ENCODE measurements at regions of chr15 and their contacts with region 1.

Region 1: DNA sequence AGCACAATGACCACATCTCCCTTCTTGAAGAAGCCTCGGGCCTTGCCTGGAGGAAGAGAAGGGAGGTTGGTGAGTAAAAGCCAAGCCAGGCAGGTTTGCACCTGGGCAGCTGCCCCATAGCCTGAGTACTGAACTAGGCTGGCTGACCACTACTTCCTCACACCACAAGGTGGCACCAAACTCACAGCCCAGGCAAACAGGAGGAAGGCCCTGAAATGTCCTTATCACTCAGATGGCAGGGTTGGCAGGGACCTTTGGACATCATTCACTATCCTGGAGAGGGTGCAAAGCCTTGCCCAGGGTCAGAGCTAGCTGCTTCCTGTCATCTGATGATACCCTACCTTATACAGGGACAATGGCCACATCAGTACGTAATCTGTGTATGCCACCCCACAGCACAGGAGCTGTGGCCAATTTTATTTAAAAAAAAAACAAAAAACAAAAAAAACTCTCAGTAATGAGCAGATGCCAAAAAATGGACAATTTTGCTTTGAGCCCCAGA is 2.2 kb upstream of the GRAMD2A start:
- DNase-seq: peak; percentile 86
- H3K4me3 ChIP-seq: no peak overlapping the region
- H3K27ac ChIP-seq: no peak overlapping the region
- H3K4me1 ChIP-seq: peaks cover 37% of the 10 kb centered on the region
- H3K27me3 ChIP-seq: no peaks in the 10 kb centered on the region
- CTCF ChIP-seq: peak; percentile 76 to 88 (median 86)
- POLR2A ChIP-seq: no peak

Region 2: DNA sequence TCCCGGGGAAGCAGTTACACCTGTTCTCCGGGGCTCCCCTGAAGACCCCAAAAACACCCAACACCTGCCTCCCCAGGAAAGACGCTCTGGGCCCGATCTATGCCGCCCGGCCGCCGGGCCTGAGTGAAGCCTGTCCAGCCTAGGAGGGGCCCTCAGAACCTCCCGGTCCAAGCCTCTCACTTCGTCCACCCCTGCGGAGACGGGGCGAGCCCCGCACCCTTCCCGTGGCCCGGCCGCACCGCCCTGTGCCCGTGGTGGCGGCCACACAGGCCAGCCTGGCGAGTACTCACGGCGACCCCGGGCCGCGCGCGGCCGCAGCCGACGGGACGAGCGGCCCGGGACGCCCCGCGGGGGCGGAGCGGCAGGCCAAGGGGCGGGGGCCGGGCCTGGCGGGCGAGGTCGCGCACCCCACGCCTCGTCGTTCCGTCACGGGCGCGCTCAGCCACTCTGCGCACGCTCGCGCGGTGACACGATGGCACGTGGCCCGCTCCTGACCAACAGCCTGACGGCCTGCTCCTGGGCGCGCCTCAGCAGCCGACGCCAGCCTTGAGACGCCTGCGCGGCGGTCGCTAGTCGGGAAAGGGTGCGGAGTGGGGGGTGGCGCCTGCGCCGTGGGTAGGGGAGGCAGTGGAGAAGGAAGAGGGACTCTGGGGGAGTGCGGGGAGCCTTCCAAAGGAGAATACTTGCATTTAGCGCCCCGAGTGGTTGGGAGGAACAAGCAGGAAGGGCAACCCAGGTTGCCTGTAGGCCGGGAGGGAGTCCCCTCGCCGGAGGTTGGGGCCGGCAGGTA is 72.6 kb after region 1 on chr15 and contains the start of gene PARP6:
- intact Hi-C with region 1: loop called (anchors 10 kb)
- DNase-seq: peak; percentile 97
- H3K4me3 ChIP-seq: peak within 1 kb of the TSS; percentile 81 to 89
- H3K27ac ChIP-seq: peak within 1 kb of the TSS; percentile 90 to 92
- H3K4me1 ChIP-seq: peaks cover 19% of the 10 kb centered on the region
- H3K27me3 ChIP-seq: no peaks in the 10 kb centered on the region
- CTCF ChIP-seq: peak; percentile 75 to 95 (median 90)
- POLR2A ChIP-seq: no peak
- total RNA-seq, gene PARP6: 114 to 182 TPM

Region 3: DNA sequence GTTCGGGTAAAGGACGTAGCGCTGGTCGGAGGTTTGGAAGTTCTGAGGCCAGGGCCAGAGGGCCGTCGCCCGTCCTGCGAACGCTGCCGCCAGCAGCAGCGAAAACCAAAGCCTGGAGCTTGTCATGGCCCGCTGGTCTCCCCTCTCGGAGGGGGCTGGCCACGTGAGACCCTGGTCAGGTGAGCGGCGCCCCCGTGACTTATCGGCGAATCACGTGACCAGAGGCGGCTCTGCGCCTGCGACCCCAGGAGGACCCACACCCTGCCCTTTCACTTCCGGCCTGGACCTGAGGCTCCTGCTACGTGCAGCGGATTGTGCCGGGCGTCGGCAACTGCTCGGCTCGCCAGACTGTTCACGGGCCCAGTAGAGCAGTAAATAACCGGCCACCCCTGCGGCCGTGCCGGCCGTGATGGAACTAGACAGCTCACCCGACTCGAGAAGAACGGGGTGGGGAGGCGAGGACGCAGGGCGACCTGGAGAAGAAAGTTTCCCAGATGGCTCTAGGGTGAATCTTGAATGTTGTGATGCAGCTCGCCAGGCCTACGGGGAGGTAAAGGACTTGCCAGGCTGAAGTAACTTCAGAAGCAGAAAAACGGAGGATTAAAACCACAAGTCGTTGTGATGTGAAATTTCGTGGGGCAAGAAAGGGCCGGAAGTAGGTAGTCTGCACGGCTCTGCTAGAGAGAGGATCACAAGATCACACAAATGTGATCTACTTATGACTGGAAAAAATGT is 176.3 kb after region 1 on chr15 and contains the start of gene HEXA:
- intact Hi-C with region 1: loop called (anchors 5 kb)
- DNase-seq: peak; percentile 97
- H3K4me3 ChIP-seq: peak within 1 kb of the TSS; percentile 75 to 88
- H3K27ac ChIP-seq: peak within 1 kb of the TSS; percentile 80 to 93
- H3K4me1 ChIP-seq: peaks cover 13% of the 10 kb centered on the region
- H3K27me3 ChIP-seq: no peaks in the 10 kb centered on the region
- CTCF ChIP-seq: peak in 2 of 3 experiments; percentile 21
- POLR2A ChIP-seq: no peak
- total RNA-seq, gene HEXA: 110 to 188 TPM

Measured in testis (tissue), 5 donors.